Activated CD8-positive, alpha-beta T cell treated with anti-CD3 and anti-CD28 coated beads for 36 hours (primary cell): ENCODE measurements at regions of chr5 and their contacts with region 1.

Region 1: GRCh38 chr5:43008369-43009153 is 31.6 kb downstream of the ANXA2R start:
- DNase-seq: peak; percentile 95
- ATAC-seq: peak; percentile 70
- H3K4me3 Mint-ChIP-seq: peak overlapping the region; percentile 93
- H3K27ac Mint-ChIP-seq: peak overlapping the region; percentile 99
- H3K4me1 Mint-ChIP-seq: peaks cover 30% of the 10 kb centered on the region
- H3K27me3 Mint-ChIP-seq: no peaks in the 10 kb centered on the region
- CTCF ChIP-seq: no peak

Region 2: GRCh38 chr5:42950440-42951292 is 57.9 kb before region 1 on chr5:
- CTCF ChIA-PET with region 1: interaction called, 18 read pairs
- POLR2A ChIA-PET with region 1: interaction called, 14 read pairs
- intact Hi-C with region 1: no loop called
- DNase-seq: peak; percentile 82
- ATAC-seq: peak; percentile 46
- H3K4me3 Mint-ChIP-seq: peak overlapping the region; percentile 89
- H3K27ac Mint-ChIP-seq: peak overlapping the region; percentile 97
- H3K4me1 Mint-ChIP-seq: peaks cover 19% of the 10 kb centered on the region
- H3K27me3 Mint-ChIP-seq: no peaks in the 10 kb centered on the region
- CTCF ChIP-seq: no peak